ENCODE measurements at regions of chr9 and their contacts with region 1.

Region 1: GRCh38 chr9:81716409-81716808 is 27.1 kb upstream of the TLE1 start:
- DNase-seq: no peak
- H3K4me3 ChIP-seq: no peak overlapping the region
- H3K27me3 ChIP-seq: peaks cover 3% of the 10 kb centered on the region; the same call in 1 of the 2 replicates
- CTCF ChIP-seq: no peak

Region 2: DNA sequence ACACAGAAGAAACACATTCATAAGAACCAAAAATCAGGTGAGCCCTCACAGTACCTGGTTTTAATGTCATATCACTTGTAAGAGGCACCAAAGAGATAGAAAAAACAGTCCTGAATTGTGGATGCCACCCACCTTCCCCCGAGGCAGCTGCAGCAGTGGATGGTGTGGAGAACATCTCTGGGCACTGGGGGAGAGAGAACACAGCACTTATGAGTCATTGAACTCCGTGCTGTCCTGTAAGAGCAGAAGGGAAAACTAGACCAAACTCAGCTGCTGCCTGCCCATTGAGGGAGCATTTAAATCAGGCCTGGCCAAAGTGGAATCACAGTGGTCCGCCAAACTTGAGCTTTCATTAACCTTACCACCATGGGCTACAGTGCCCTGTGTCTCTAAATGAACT is 568.3 kb after region 1 on chr9:
- CTCF ChIA-PET with region 1: no interaction called
- POLR2A ChIA-PET with region 1: interaction called, 11 read pairs
- DNase-seq: no peak
- H3K4me3 ChIP-seq: no peak overlapping the region
- H3K27me3 ChIP-seq: no peaks in the 10 kb centered on the region
- CTCF ChIP-seq: no peak